Gastrocnemius medialis (tissue), 4 donors: ENCODE measurements at regions of chr15 and their contacts with region 1.

Region 1: GRCh38 chr15:40064221-40064894 is 25.4 kb upstream of the SRP14 start:
- DNase-seq: no peak
- ATAC-seq: no peak
- H3K4me3 ChIP-seq: no peak overlapping the region
- H3K27ac ChIP-seq: peak overlapping the region; percentile 73 to 79 (median 79)
- H3K4me1 ChIP-seq: peaks cover 16 to 34% of the 10 kb centered on the region in 2 donors
- H3K27me3 ChIP-seq: no peaks in the 10 kb centered on the region
- CTCF ChIP-seq: no peak
- POLR2A ChIP-seq: no peak

Region 2: GRCh38 chr15:39782441-39783138 is 281.8 kb before region 1 on chr15 and contains the start of gene FSIP1:
- in situ Hi-C with region 1: no loop called
- intact Hi-C with region 1: no loop called
- DNase-seq: peak; percentile 81 to 88
- ATAC-seq: peak; percentile 97
- H3K4me3 ChIP-seq: peak within 1 kb of the TSS; percentile 64 to 99 (median 88)
- H3K27ac ChIP-seq: peak within 1 kb of the TSS; percentile 49 to 75 (median 68)
- H3K4me1 ChIP-seq: peaks cover 0 to 14% of the 10 kb centered on the region in 2 donors
- H3K27me3 ChIP-seq: no peaks in the 10 kb centered on the region
- CTCF ChIP-seq: no peak
- POLR2A ChIP-seq: peak in 1 of 2 donors; percentile 25
- total RNA-seq, gene FSIP1: 0.11 to 23.9 (median 1.0) TPM in 3 of 4 donors, not detected in the other

Region 3: GRCh38 chr15:40103176-40103858 is 39.0 kb after region 1 on chr15:
- in situ Hi-C with region 1: no loop called
- intact Hi-C with region 1: loop called (anchors 2 kb)
- DNase-seq: peak; percentile 93 to 97
- ATAC-seq: peak; percentile 69 to 80
- H3K4me3 ChIP-seq: peak overlapping the region; percentile 8 to 23 (median 14)
- H3K27ac ChIP-seq: peak overlapping the region; percentile 93 to 99 (median 98)
- H3K4me1 ChIP-seq: peaks cover 87 to 91% of the 10 kb centered on the region in 2 donors
- H3K27me3 ChIP-seq: no peaks in the 10 kb centered on the region
- CTCF ChIP-seq: peak in 1 of 5 experiments; percentile 11
- POLR2A ChIP-seq: peak; percentile 73 to 75

Region 4: DNA sequence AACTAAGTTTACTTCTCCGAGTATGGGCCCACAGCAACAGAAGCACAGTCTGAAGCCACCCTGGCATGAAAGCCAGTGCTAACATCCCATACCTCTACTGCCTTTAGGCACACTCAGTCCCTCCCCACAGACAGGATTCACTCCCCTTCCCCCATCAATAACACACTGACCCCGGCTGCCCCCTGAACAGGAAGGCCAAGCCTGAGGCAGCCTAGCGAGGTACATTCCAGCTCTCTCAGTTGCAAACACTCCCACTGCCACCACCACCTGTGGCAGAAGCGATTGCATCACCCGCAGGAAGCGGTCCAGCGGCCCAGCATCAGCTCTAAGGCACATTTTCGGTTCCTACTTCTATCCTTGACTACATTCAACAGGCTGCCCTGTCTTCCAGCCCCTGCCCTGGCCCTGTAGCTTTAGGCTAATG is 51.3 kb after region 1 on chr15:
- in situ Hi-C with region 1: loop called in 1 of 4 experiments (anchors 5 kb)
- intact Hi-C with region 1: no loop called
- DNase-seq: peak in 1 of 2 donors; percentile 54
- ATAC-seq: peak in 1 of 2 donors; percentile 58
- H3K4me3 ChIP-seq: no peak overlapping the region
- H3K27ac ChIP-seq: no peak overlapping the region
- H3K4me1 ChIP-seq: no peaks in the 10 kb centered on the region
- H3K27me3 ChIP-seq: no peaks in the 10 kb centered on the region
- CTCF ChIP-seq: no peak
- POLR2A ChIP-seq: no peak